ENCODE measurements at regions of chr13 and their contacts with region 1.

Region 1: DNA sequence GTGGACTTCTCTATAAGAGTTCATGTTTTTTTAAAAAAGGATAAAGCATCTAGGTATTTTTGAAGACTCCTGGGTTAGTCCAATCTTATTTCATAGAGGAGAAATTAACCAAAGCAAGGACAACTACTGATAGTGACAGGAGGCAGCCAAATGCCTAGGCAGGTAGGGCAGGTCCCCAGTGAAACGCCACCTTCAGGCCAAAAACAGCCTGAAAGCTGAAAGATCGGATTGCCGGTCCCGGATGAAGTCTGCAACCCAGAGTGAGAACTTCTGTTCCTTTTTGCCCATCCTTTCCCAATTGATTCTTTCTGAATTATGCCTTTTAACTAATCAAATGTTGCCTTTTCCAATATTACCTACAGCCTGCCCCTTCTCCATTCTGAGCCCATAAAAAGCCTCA is 6.1 kb upstream of the GGACT start:
- DNase-seq: peak; percentile 18
- ATAC-seq: peak; percentile 88
- H3K4me3 ChIP-seq: no peak overlapping the region
- H3K27ac ChIP-seq: no peak overlapping the region
- H3K4me1 ChIP-seq: peaks cover 6% of the 10 kb centered on the region; the same call in 1 of the 2 replicates
- H3K27me3 ChIP-seq: no peaks in the 10 kb centered on the region; a peak in 2 of 5 replicates
- CTCF ChIP-seq: peak; percentile 64
- EP300 ChIP-seq: no peak
- POLR2A ChIP-seq: no peak
- RAD21 ChIP-seq: no peak

Region 2: DNA sequence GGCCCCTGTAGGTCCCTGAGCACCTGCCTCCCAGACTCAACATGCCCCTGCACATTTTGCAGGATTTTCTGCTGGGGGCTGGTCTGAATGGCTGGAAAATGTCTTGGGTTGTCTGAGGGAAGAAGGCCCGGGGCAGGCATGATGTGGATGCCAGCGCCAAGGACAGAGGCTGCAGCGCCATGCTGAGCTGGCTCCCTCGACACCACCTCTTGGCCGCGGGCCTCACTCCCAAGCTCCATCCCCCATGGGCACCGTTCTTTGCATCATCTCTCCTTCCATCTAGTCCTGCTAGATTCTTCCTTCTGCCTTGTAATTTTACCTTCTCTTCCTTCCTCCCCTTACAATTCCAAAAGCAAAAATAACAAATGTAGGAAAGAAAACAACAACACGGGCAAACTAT is 693.8 kb before region 1 on chr13:
- CTCF ChIA-PET with region 1: no interaction called
- POLR2A ChIA-PET with region 1: no interaction called
- in situ Hi-C with region 1: no loop called
- intact Hi-C with region 1: loop called (anchors 1 kb)
- DNase-seq: no peak
- ATAC-seq: peak; percentile 20
- H3K4me3 ChIP-seq: no peak overlapping the region
- H3K27ac ChIP-seq: no peak overlapping the region
- H3K4me1 ChIP-seq: peaks cover 34% of the 10 kb centered on the region
- H3K27me3 ChIP-seq: peaks cover 0 to 1% of the 10 kb centered on the region in 2 experiments; a peak in 1 of 5 replicates
- CTCF ChIP-seq: no peak
- EP300 ChIP-seq: no peak
- POLR2A ChIP-seq: no peak
- RAD21 ChIP-seq: no peak

Region 3: DNA sequence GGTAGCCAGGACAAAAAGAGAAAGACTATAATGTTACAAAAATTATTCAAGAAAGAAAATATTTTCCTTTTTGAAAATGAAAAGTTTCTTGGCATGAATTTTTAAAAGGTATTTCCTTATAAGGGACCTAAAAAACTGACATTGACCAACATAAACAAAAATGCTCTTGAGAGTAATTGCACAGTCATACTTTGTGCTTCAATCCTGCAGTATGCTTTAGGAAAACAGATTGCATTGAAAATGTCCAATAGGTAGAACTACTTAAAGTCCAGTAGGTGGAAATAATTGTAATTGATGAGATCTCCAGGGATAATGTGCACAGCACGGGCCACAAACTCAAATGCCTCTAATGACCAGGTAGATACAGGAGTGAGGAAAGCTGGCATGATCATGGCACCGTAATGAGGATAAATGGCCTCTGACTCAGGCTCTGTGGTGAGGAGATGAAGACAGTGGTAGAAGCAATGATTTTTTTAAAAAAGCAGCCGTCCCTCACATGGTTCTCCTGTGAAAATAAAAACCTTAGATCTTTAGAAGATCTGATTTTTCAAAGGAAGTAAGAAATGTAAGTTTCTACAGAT is 1135.8 kb after region 1 on chr13:
- CTCF ChIA-PET with region 1: no interaction called
- POLR2A ChIA-PET with region 1: no interaction called
- in situ Hi-C with region 1: no loop called
- intact Hi-C with region 1: no loop called
- DNase-seq: no peak
- ATAC-seq: no peak
- H3K4me3 ChIP-seq: no peak overlapping the region
- H3K27ac ChIP-seq: no peak overlapping the region
- H3K4me1 ChIP-seq: no peaks in the 10 kb centered on the region
- H3K27me3 ChIP-seq: no peaks in the 10 kb centered on the region
- CTCF ChIP-seq: no peak
- EP300 ChIP-seq: no peak
- POLR2A ChIP-seq: no peak
- RAD21 ChIP-seq: no peak

Measured in HepG2 (cell line).